Astrocyte of the cerebellum (primary cell): ENCODE measurements at regions of chr6 and their contacts with region 1.

Region 1: DNA sequence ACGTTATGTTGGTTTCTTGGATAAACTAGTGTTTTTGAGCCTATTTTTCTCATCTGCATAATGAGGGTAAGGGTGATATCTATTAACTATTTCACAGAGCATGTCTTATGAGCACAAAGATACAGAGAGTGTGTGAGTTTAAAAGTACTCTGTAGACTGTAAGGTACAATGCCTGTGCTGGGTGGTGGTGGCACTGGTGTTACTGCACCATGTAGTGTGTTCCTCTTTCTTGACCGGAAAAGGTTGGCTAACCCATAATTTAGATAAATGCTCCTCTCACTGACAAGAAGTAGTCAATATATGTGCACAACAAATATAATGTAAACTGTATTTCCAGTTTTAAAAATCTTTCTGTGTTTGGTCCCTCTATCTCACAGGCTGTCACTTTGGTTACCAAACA is 116.2 kb upstream of the MMS22L start:
- DNase-seq: no peak
- H3K4me3 ChIP-seq: no peak overlapping the region
- CTCF ChIP-seq: no peak

Region 2: GRCh38 chr6:97215157-97215769 is 183.9 kb before region 1 on chr6:
- in situ Hi-C with region 1: loop called (anchors 5 kb)
- DNase-seq: peak; percentile 54
- H3K4me3 ChIP-seq: no peak overlapping the region
- CTCF ChIP-seq: peak; percentile 70